ENCODE measurements at regions of chr15 and their contacts with region 1.

Region 1: GRCh38 chr15:72616491-72617210 is 37.8 kb upstream of the GOLGA6B start:
- DNase-seq: no peak
- H3K4me3 ChIP-seq: no peak overlapping the region
- H3K27ac ChIP-seq: no peak overlapping the region
- H3K4me1 ChIP-seq: no peaks in the 10 kb centered on the region
- H3K27me3 ChIP-seq: no peaks in the 10 kb centered on the region
- CTCF ChIP-seq: no peak
- EP300 ChIP-seq: no peak
- POLR2A ChIP-seq: no peak

Region 2: DNA sequence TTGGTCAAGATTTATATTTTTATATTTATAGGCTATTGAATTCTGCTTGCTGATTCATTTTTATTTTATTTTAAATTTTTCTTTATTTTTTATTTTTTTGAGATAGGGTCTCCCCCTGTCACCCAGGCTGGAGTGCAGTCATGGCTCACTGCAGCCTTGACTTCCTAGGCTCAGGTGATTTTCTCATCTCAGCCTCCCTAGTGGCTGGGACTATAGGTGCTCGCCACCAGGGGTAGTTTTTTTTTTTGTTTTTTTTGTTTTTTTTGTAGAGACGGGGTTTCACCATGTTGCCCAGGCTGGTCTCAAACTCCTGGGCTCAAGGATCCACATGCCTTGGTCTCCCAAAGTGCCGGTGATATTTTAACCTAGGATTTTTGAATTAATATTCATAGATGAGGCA is 775.1 kb before region 1 on chr15:
- intact Hi-C with region 1: no loop called
- DNase-seq: no peak
- H3K4me3 ChIP-seq: no peak overlapping the region
- H3K27ac ChIP-seq: no peak overlapping the region
- H3K4me1 ChIP-seq: no peaks in the 10 kb centered on the region
- H3K27me3 ChIP-seq: no peaks in the 10 kb centered on the region
- CTCF ChIP-seq: no peak
- EP300 ChIP-seq: no peak
- POLR2A ChIP-seq: no peak

Region 3: GRCh38 chr15:72671535-72671934 is 54.9 kb after region 1 on chr15:
- intact Hi-C with region 1: loop called in 1 of 4 experiments (anchors 10 kb)
- DNase-seq: no peak
- H3K4me3 ChIP-seq: no peak overlapping the region
- H3K27ac ChIP-seq: no peak overlapping the region
- H3K4me1 ChIP-seq: peaks cover 1% of the 10 kb centered on the region
- H3K27me3 ChIP-seq: no peaks in the 10 kb centered on the region
- CTCF ChIP-seq: no peak
- EP300 ChIP-seq: no peak
- POLR2A ChIP-seq: no peak